Activated B cell treated with CpG ODN at 0.5 μM for 24 hours (primary cell): ENCODE measurements at regions of chr7 and their contacts with region 1.

Region 1: GRCh38 chr7:44797329-44798251 is 1.1 kb downstream of the PPIA start:
- DNase-seq: peak; percentile 70
- ATAC-seq: peak; percentile 56
- H3K4me3 Mint-ChIP-seq: peak overlapping the region; percentile 97
- H3K27ac Mint-ChIP-seq: peak overlapping the region; percentile 96
- H3K4me1 Mint-ChIP-seq: peaks cover 38% of the 10 kb centered on the region
- H3K27me3 Mint-ChIP-seq: no peaks in the 10 kb centered on the region
- CTCF ChIP-seq: no peak

Region 2: DNA sequence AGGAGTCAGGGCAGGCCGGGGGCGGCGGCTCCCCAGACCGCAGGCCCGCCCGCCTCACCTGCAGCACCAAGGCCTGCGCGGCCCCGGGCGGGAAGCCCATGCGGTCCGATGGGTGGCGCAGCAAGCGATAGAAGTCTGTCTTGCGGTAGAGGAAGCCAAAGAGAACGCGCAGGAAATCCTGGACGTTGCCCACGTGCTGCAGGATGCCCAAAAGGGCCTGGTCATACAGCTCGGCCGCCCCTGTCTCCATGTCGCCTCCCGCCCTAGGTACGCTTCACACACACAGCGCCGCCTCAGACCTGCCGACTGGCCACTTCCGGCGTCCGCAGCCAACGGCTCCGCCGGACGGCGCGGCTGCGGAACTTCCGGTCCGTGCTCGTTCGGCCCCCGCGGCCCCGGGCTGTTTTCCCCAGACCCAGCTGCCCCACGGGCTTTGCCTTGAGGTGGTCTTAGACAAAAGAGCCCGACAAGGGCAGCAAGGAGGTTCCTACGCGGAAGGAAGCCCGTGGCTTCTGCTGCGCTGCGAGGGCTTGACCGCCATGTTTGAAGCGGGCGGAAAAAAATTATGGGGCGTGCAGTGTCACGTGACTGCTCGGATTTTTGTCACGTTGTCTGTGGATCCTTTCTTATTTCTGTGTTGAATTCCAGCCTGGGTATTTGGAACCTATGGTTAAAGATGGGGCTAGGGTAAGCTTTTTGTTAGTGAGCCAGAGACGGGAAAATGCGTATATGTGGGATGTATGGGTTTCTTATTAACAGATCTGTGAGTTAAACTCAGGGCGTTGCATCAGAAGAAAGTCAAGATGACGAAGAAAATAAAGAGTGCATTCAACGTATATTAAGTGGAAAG is 307.0 kb before region 1 on chr7 and contains the start of gene NUDCD3:
- CTCF ChIA-PET with region 1: no interaction called
- POLR2A ChIA-PET with region 1: interaction called, 3 read pairs
- intact Hi-C with region 1: loop called (anchors 1 kb)
- DNase-seq: peak; percentile 80
- ATAC-seq: peak; percentile 84
- H3K4me3 Mint-ChIP-seq: peak within 1 kb of the TSS; percentile 90
- H3K27ac Mint-ChIP-seq: peak within 1 kb of the TSS; percentile 97
- H3K4me1 Mint-ChIP-seq: peaks cover 46% of the 10 kb centered on the region
- H3K27me3 Mint-ChIP-seq: peaks cover 5% of the 10 kb centered on the region
- CTCF ChIP-seq: no peak
- total RNA-seq, gene NUDCD3: 80.7 and 85.1 TPM in 2 replicates

Region 3: DNA sequence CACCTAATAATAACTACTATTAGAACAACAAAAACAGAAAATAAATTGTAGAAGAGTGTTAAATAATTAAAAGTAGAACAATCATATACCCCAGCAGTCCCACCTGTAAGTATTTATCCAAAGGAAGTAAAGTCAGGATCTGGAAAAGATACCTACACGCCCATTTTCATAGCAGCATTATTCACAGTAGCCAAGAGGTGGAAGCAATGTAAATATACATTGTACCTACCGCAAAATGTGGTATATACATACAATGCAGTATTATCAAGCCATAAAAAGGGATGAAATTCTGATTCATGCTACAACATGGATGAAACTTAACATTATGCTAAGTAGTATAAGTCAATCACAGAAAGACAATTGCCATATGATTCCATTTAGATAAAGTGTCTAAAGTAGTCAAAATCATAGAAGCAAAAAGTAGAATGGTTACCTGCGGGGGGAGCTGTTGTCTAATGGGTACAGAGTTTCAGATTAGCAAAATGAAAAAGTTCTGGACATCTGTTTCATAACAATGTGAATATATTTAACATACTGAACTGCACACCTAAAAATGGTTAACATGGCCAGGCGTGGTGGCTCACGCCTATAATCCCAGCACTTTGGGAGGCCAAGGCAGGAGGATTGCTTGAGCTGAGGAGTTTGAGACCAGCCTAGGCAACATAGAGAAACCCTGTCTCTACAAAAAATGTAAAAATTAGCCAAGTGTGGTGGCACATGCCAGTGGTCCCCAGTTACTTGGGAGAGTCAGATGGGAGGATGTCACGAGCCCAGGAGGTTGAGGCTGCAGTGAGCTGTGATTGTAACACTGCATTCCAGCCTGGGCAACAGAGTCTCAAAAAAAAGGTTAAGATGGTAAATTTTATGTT is 209.5 kb before region 1 on chr7:
- CTCF ChIA-PET with region 1: no interaction called
- POLR2A ChIA-PET with region 1: interaction called, 5 read pairs
- intact Hi-C with region 1: loop called (anchors 1 kb)
- DNase-seq: no peak
- ATAC-seq: peak; percentile 79
- H3K4me3 Mint-ChIP-seq: no peak overlapping the region
- H3K27ac Mint-ChIP-seq: no peak overlapping the region
- H3K4me1 Mint-ChIP-seq: peaks cover 6% of the 10 kb centered on the region
- H3K27me3 Mint-ChIP-seq: peaks cover 3% of the 10 kb centered on the region
- CTCF ChIP-seq: no peak

Region 4: DNA sequence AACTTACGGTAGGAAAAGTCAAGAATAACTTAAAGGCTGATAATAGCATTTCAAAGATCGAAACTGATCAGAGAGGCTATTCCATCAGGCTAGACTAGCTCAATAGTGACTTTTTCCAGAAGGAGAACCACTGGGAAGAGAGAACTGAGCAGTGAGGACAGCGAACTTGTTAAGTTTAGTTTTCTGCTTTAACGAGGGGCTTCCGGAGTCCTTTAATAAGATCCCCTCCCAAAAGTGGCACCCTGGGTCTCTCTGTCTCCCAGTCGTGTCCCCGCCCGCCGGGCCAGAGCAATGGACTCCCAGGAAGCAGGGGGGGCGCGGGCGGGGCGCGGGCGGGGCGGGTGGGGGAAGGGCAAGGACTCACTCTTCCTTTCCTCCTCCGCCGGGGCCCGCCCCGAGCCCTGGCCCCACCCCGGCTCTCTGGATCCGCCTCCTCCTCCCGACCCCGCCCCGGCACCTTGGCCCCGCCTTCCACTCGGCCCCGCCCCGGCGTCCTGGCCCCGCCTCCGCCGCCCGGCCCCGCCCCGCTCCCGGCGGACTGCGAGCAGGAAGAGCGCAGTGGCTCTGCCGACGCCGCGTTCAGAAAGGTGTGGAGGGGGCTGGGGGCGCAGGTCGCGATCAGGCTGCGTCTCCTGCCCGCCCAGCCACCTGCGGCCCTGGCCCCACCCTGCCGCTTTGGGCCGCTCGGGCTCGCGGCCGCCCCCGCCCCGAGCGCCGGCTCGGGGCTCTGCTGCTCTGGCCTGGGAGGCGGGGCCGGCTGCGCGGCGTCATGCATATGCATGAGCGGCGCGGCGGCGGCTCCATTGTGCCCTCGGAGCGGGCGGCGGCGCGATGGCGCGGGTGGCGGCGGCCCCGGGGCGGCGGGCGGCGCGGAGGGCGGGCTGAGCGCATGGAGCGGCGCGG is 49.3 kb before region 1 on chr7 and contains the start of gene ZMIZ2:
- CTCF ChIA-PET with region 1: interaction called, 3 read pairs
- POLR2A ChIA-PET with region 1: interaction called, 77 read pairs
- intact Hi-C with region 1: loop called (anchors 1 kb)
- DNase-seq: peak; percentile 97
- ATAC-seq: peak; percentile 78
- H3K4me3 Mint-ChIP-seq: peak within 1 kb of the TSS; percentile 91
- H3K27ac Mint-ChIP-seq: peak within 1 kb of the TSS; percentile 95
- H3K4me1 Mint-ChIP-seq: peaks cover 48% of the 10 kb centered on the region
- H3K27me3 Mint-ChIP-seq: no peaks in the 10 kb centered on the region
- CTCF ChIP-seq: no peak
- total RNA-seq, gene ZMIZ2: 378 and 440 TPM in 2 replicates

Region 5: DNA sequence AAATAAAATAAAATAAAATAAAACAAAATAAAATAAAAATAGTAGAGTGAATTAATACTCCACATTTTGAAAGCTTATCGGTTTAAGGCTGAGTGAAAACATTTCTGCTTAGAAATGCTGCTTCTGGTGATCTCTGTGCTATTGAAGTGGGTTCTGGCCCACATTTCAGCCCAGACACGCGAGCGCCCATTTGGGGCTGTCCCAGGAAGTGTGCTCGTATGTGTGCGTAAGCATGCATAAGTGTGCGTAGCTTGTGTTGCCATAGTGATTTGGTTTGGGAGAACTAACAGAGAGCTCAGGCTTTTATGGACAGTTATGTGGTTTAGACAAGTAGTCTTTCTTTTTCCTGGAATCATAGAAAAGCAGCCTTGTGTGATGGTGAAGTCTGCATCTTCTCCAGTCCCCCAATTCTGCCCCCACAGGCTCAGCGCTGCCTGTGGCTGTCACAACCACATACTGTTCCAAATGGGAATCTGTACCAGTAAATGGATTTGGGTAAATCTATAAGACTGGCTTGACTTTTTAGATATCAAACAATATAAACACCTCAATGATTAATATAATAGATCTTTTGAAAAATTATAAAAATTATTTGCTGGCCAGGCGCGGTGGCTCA is 117.5 kb after region 1 on chr7:
- CTCF ChIA-PET with region 1: no interaction called
- POLR2A ChIA-PET with region 1: interaction called, 4 read pairs
- intact Hi-C with region 1: loop called (anchors 2 kb)
- DNase-seq: peak; percentile 53
- ATAC-seq: peak; percentile 95
- H3K4me3 Mint-ChIP-seq: peak overlapping the region; percentile 41
- H3K27ac Mint-ChIP-seq: peak overlapping the region; percentile 78
- H3K4me1 Mint-ChIP-seq: peaks cover 11% of the 10 kb centered on the region
- H3K27me3 Mint-ChIP-seq: no peaks in the 10 kb centered on the region
- CTCF ChIP-seq: no peak

Region 6: DNA sequence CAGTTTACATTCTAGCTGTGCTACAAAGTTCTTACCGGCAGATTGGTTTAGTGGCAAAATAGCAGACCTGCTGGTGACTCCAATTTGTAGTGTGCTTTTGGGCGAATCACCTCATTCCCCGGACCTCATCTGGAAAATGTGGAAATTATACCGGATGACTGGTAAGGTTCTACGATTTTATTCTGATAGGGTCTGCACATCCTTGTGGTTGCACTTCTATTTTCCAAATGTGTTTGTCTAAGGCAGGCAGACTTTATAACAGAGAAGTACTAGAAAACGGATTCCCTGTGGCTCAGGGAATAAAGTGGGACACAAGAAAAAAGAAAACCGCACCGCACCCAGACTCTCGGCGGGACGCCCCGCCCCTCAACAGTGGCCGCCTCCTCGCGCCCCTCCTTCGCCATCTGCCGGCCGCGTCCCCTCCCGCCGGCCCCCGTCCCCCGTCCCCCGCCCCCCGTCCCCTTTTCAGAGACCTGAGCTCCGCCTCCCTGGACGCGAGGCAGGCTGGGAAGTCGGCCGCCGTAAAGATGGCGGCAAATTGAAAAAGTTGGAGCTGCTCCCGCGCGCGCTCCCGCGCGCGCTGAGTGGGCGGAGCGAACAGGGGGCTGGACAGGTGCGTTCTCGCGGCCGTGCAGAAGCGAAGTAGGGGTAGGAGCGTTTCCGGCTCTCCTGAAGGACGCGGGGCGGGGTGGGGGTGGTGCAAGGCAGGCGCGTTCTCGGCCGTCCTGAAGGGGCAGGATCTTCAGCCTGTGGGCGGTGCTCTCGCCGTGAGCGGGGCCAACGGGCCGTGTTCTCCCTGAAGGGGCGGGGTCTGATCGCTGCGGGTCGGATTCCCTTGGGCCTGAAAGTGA is 201.9 kb after region 1 on chr7:
- CTCF ChIA-PET with region 1: no interaction called
- POLR2A ChIA-PET with region 1: no interaction called
- intact Hi-C with region 1: loop called (anchors 2 kb)
- DNase-seq: peak; percentile 94
- ATAC-seq: peak; percentile 85
- H3K4me3 Mint-ChIP-seq: peak overlapping the region; percentile 95
- H3K27ac Mint-ChIP-seq: peak overlapping the region; percentile 94
- H3K4me1 Mint-ChIP-seq: peaks cover 60% of the 10 kb centered on the region
- H3K27me3 Mint-ChIP-seq: no peaks in the 10 kb centered on the region
- CTCF ChIP-seq: no peak